GM12878 (cell line): ENCODE measurements at regions of chr7 and their contacts with region 1.

Region 1: GRCh38 chr7:106196460-106197021 is 84.4 kb upstream of the SYPL1 start:
- DNase-seq: no peak
- ATAC-seq: no peak
- H3K4me3 ChIP-seq: no peak overlapping the region
- H3K27ac ChIP-seq: no peak overlapping the region
- H3K4me1 ChIP-seq: no peaks in the 10 kb centered on the region
- H3K27me3 ChIP-seq: no peaks in the 10 kb centered on the region
- CTCF ChIP-seq: no peak
- EP300 ChIP-seq: no peak
- POLR2A ChIP-seq: no peak
- RAD21 ChIP-seq: no peak

Region 2: DNA sequence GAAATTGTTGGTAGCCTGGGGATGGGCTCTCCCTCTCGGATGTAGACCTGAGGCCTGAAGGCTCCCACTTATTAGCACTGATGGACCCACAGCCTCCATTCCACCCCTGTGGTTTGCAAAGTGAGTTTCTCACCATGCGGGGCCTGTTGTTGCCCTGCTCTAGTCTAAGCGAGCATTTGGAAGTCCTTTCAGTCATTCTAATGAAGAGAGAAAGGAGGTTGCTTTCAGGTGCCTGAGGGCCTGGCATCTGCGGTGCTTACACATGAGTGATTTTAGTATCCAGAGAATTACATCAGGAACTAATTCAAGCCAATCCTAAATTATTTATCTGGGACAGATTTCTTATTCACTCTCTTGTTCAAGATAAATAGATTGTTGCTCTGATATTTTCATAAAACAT is 26.6 kb after region 1 on chr7:
- CTCF ChIA-PET with region 1: interaction called, 3 read pairs
- POLR2A ChIA-PET with region 1: interaction called, 10 read pairs
- RAD21 ChIA-PET with region 1: no interaction called
- SMC1A ChIA-PET with region 1: interaction called, 4 read pairs
- in situ Hi-C with region 1: no loop called
- intact Hi-C with region 1: no loop called
- DNase-seq: no peak
- ATAC-seq: no peak
- H3K4me3 ChIP-seq: no peak overlapping the region
- H3K27ac ChIP-seq: no peak overlapping the region
- H3K4me1 ChIP-seq: no peaks in the 10 kb centered on the region
- H3K27me3 ChIP-seq: no peaks in the 10 kb centered on the region
- CTCF ChIP-seq: no peak
- EP300 ChIP-seq: no peak
- POLR2A ChIP-seq: no peak
- RAD21 ChIP-seq: no peak

Region 3: GRCh38 chr7:106367018-106367420 is 170.5 kb after region 1 on chr7:
- CTCF ChIA-PET with region 1: no interaction called
- POLR2A ChIA-PET with region 1: no interaction called
- RAD21 ChIA-PET with region 1: no interaction called
- SMC1A ChIA-PET with region 1: no interaction called
- in situ Hi-C with region 1: no loop called
- intact Hi-C with region 1: no loop called
- DNase-seq: no peak
- ATAC-seq: peak; percentile 80
- H3K4me3 ChIP-seq: no peak overlapping the region
- H3K27ac ChIP-seq: no peak overlapping the region
- H3K4me1 ChIP-seq: no peaks in the 10 kb centered on the region
- H3K27me3 ChIP-seq: no peaks in the 10 kb centered on the region
- CTCF ChIP-seq: peak; percentile 35 to 48 (median 41); a peak in 5 of 6 replicates
- EP300 ChIP-seq: no peak
- POLR2A ChIP-seq: no peak
- RAD21 ChIP-seq: peak; percentile 75